Left cardiac atrium (tissue), 4 donors: ENCODE measurements at regions of chr12 and their contacts with region 1.

Region 1: DNA sequence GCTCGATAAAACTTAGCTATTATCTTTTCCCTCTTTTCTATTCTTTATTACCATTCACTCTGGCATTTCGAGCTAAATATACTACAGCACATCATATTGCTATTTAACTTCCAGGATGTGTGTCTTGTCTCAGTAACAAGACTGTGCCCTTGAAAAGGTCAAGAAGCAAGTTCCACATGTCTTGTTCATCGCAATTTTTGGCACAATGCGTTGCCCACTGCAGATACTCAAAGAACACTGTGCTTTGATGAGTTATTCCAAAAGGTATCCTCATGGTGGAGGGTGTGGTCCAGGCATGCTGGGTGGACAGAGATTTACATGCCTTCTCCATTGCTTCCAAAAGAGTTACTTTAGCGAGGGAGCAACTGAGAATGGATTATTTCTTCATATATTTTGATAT is 6.6 kb downstream of the E2F7 start:
- DNase-seq: no peak
- ATAC-seq: no peak

Region 2: GRCh38 chr12:76936275-76937185 is 122.2 kb before region 1 on chr12:
- intact Hi-C with region 1: no loop called
- DNase-seq: no peak
- ATAC-seq: no peak

Region 3: GRCh38 chr12:77679686-77680085 is 620.9 kb after region 1 on chr12:
- intact Hi-C with region 1: loop called in 1 of 2 experiments (anchors 5 kb)
- DNase-seq: no peak
- ATAC-seq: no peak